ENCODE measurements at regions of chr13 and their contacts with region 1.

Region 1: GRCh38 chr13:49371943-49372613 is 71.8 kb downstream of the CAB39L start:
- DNase-seq: peak; percentile 68 to 74
- H3K4me3 ChIP-seq: no peak overlapping the region
- H3K4me3 Mint-ChIP-seq: peak overlapping the region; percentile 1
- H3K27ac Mint-ChIP-seq: peak overlapping the region; percentile 71
- H3K4me1 ChIP-seq: peaks cover 83% of the 10 kb centered on the region
- H3K4me1 Mint-ChIP-seq: peaks cover 47% of the 10 kb centered on the region
- H3K27me3 ChIP-seq: no peaks in the 10 kb centered on the region
- H3K27me3 Mint-ChIP-seq: no peaks in the 10 kb centered on the region
- CTCF ChIP-seq: no peak

Region 2: GRCh38 chr13:49314344-49314882 is 57.7 kb before region 1 on chr13:
- CTCF ChIA-PET with region 1: interaction called, 5 read pairs
- POLR2A ChIA-PET with region 1: no interaction called
- intact Hi-C with region 1: loop called (anchors 2 kb)
- DNase-seq: no peak
- H3K4me3 ChIP-seq: no peak overlapping the region
- H3K4me3 Mint-ChIP-seq: peak overlapping the region; percentile 20
- H3K27ac Mint-ChIP-seq: peak overlapping the region; percentile 60
- H3K4me1 ChIP-seq: peaks cover 21% of the 10 kb centered on the region
- H3K4me1 Mint-ChIP-seq: peaks cover 26% of the 10 kb centered on the region
- H3K27me3 ChIP-seq: no peaks in the 10 kb centered on the region
- H3K27me3 Mint-ChIP-seq: no peaks in the 10 kb centered on the region
- CTCF ChIP-seq: no peak

Region 3: GRCh38 chr13:49329821-49330220 is 42.3 kb before region 1 on chr13:
- CTCF ChIA-PET with region 1: no interaction called
- POLR2A ChIA-PET with region 1: no interaction called
- intact Hi-C with region 1: loop called (anchors 2 kb)
- DNase-seq: peak in 1 of 2 experiments; percentile 32
- H3K4me3 ChIP-seq: no peak overlapping the region
- H3K4me3 Mint-ChIP-seq: no peak overlapping the region
- H3K27ac Mint-ChIP-seq: peak overlapping the region; percentile 37
- H3K4me1 ChIP-seq: peaks cover 20% of the 10 kb centered on the region
- H3K4me1 Mint-ChIP-seq: peaks cover 27% of the 10 kb centered on the region
- H3K27me3 ChIP-seq: no peaks in the 10 kb centered on the region
- H3K27me3 Mint-ChIP-seq: no peaks in the 10 kb centered on the region
- CTCF ChIP-seq: no peak

Region 4: GRCh38 chr13:49342454-49342853 is 29.6 kb before region 1 on chr13:
- CTCF ChIA-PET with region 1: interaction called, 3 read pairs
- POLR2A ChIA-PET with region 1: interaction called, 3 read pairs
- intact Hi-C with region 1: loop called (anchors 1 kb)
- DNase-seq: no peak
- H3K4me3 ChIP-seq: no peak overlapping the region
- H3K4me3 Mint-ChIP-seq: no peak overlapping the region
- H3K27ac Mint-ChIP-seq: no peak overlapping the region
- H3K4me1 ChIP-seq: peaks cover 54% of the 10 kb centered on the region
- H3K4me1 Mint-ChIP-seq: peaks cover 19% of the 10 kb centered on the region
- H3K27me3 ChIP-seq: no peaks in the 10 kb centered on the region
- H3K27me3 Mint-ChIP-seq: no peaks in the 10 kb centered on the region
- CTCF ChIP-seq: no peak

Region 5: GRCh38 chr13:49400755-49401659 is 28.9 kb after region 1 on chr13:
- CTCF ChIA-PET with region 1: no interaction called
- POLR2A ChIA-PET with region 1: interaction called, 3 read pairs
- intact Hi-C with region 1: loop called (anchors 1 kb)
- DNase-seq: peak; percentile 67 to 74
- H3K4me3 ChIP-seq: peak overlapping the region; percentile 33
- H3K4me3 Mint-ChIP-seq: peak overlapping the region; percentile 72
- H3K27ac Mint-ChIP-seq: peak overlapping the region; percentile 58
- H3K4me1 ChIP-seq: peaks cover 30% of the 10 kb centered on the region
- H3K4me1 Mint-ChIP-seq: peaks cover 6% of the 10 kb centered on the region
- H3K27me3 ChIP-seq: no peaks in the 10 kb centered on the region
- H3K27me3 Mint-ChIP-seq: no peaks in the 10 kb centered on the region
- CTCF ChIP-seq: no peak

Region 6: DNA sequence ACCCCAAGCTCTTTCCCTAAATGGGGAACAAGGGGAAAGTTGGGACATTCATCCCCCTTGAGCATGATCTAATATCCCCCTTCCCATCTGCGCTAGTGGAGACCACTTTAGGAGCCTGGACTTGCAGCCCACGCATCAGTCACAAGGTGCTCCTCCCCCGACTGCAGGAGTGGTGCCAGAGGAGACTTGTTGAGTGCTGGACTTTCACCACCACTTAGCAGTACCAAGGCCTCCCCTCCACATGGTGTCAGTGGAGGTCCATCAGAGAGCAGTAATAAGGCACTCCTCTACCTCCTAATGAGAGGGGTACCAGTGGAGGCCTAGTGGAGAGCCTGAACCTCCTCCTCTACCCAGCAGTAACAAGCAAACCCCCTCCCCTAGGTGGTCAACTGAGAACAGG is 49.3 kb after region 1 on chr13:
- CTCF ChIA-PET with region 1: no interaction called
- POLR2A ChIA-PET with region 1: no interaction called
- intact Hi-C with region 1: no loop called
- DNase-seq: peak; percentile 58 to 62
- H3K4me3 ChIP-seq: no peak overlapping the region
- H3K4me3 Mint-ChIP-seq: no peak overlapping the region
- H3K27ac Mint-ChIP-seq: no peak overlapping the region
- H3K4me1 ChIP-seq: no peaks in the 10 kb centered on the region
- H3K4me1 Mint-ChIP-seq: peaks cover 4% of the 10 kb centered on the region
- H3K27me3 ChIP-seq: no peaks in the 10 kb centered on the region
- H3K27me3 Mint-ChIP-seq: no peaks in the 10 kb centered on the region
- CTCF ChIP-seq: peak; percentile 20 to 26